ENCODE measurements at regions of chr5 and their contacts with region 1.

Region 1: DNA sequence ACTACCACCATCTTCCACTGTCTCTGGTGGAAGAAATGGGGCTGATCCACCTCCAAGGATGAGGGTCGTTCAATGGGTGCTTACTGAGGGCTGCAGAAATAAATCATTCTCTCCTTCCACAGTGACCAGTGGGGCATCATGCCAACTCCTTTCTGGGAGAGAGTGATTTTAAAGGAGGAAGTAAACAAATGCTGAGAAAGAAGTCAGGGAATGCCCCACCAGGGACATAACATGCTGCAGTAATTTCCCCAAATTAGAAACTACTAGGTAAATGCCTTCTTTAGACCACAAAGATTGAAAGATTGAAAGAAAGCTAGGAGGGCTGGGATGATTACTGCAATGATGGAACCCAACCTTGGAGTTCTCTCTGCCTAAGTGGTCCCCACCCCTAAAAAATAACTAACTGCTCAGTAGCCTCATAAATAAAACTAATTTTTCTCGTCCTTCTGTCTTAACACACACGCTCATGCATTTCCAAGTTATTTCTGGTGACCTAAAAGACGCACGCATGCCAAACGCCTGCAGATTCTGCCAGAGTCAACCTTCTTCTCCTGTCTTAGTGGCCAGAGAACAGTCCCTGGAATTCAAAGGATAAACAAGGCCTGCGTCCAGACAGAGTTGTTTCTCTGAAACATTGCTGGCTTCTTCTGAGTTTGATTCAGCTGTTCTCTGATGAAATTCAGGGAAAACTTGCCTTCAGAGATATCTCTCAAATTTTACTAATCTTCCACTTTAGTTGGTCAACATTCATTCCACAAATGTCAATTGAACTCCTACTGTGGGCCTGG is 250.0 kb downstream of the NR3C1 start:
- DNase-seq: no peak
- H3K4me3 ChIP-seq: no peak overlapping the region
- H3K27ac ChIP-seq: no peak overlapping the region
- H3K4me1 ChIP-seq: peaks cover 26% of the 10 kb centered on the region
- H3K27me3 ChIP-seq: no peaks in the 10 kb centered on the region
- CTCF ChIP-seq: no peak

Region 2: GRCh38 chr5:142894749-142895148 is 258.8 kb before region 1 on chr5:
- CTCF ChIA-PET with region 1: no interaction called
- dilution Hi-C with region 1: no loop called
- in situ Hi-C with region 1: no loop called
- intact Hi-C with region 1: no loop called
- DNase-seq: no peak
- H3K4me3 ChIP-seq: no peak overlapping the region
- H3K27ac ChIP-seq: no peak overlapping the region
- H3K4me1 ChIP-seq: peaks cover 17% of the 10 kb centered on the region
- H3K27me3 ChIP-seq: no peaks in the 10 kb centered on the region
- CTCF ChIP-seq: no peak

Region 3: DNA sequence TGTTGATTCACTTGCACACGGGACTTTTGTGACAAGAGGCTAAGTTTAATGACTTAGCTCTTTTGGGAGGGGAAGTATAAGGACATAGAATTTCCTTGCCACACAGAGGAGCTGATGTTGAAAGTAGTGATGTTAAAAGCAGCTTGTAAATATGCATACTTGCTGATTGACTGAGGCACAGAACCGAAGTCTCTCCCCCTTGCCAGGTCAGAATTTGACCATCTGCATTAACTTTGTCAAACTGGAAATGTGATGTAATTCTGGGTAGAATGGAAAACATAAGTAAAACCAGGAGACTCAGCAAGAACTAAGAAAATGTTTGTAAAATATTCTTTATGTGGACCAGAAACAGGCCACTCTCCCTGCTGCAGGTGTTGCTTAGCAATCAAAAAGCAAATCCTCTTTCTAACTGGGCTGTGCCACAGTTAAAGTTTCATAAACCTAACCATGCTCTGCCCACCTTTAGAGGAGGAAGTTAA is 34.2 kb before region 1 on chr5:
- CTCF ChIA-PET with region 1: no interaction called
- dilution Hi-C with region 1: loop called (anchors 5 kb)
- in situ Hi-C with region 1: no loop called
- intact Hi-C with region 1: no loop called
- DNase-seq: no peak
- H3K4me3 ChIP-seq: no peak overlapping the region
- H3K27ac ChIP-seq: no peak overlapping the region
- H3K4me1 ChIP-seq: peaks cover 5% of the 10 kb centered on the region
- H3K27me3 ChIP-seq: no peaks in the 10 kb centered on the region
- CTCF ChIP-seq: no peak

Region 4: GRCh38 chr5:143229896-143230675 is 76.6 kb after region 1 on chr5:
- CTCF ChIA-PET with region 1: no interaction called
- dilution Hi-C with region 1: no loop called
- in situ Hi-C with region 1: no loop called
- intact Hi-C with region 1: loop called (anchors 2 kb)
- DNase-seq: no peak
- H3K4me3 ChIP-seq: no peak overlapping the region
- H3K27ac ChIP-seq: no peak overlapping the region
- H3K4me1 ChIP-seq: peaks cover 11% of the 10 kb centered on the region
- H3K27me3 ChIP-seq: no peaks in the 10 kb centered on the region
- CTCF ChIP-seq: no peak

Region 5: DNA sequence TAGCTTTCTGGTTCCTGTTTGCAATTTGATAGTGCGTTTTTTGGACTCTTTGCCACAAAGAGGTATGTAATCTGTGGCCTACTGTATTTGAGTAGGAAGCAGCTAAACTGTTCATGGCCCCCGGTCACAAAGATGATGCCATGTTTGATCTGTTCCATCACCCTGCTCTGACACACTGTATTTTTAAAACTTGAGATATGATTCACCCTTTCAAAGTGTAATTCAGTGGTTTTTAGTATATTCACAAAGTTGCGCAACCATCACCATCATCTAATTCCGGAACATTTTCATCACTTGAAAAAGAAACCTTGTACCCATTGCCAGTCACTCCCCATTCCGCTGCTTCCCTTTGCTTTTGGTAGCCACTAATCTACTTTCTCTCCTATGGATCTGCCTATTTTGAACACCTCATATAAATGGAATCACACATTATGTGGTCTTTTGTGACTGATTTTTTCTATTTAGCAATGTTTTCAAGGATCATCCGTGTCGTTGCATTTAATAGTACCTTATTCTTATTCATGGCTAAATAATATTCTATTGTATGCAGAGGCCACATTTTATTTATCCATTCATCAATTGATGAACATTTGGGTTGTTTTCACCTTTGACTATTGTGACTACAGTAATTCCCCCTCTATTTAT is 108.3 kb after region 1 on chr5:
- CTCF ChIA-PET with region 1: no interaction called
- dilution Hi-C with region 1: no loop called
- in situ Hi-C with region 1: no loop called
- intact Hi-C with region 1: no loop called
- DNase-seq: peak; percentile 90
- H3K4me3 ChIP-seq: no peak overlapping the region
- H3K27ac ChIP-seq: peak overlapping the region; percentile 97
- H3K4me1 ChIP-seq: peaks cover 32% of the 10 kb centered on the region
- H3K27me3 ChIP-seq: no peaks in the 10 kb centered on the region
- CTCF ChIP-seq: no peak

Measured in mammary epithelial cell (primary cell).